Psoas muscle (tissue), 8 donors: ENCODE measurements at regions of chr1 and their contacts with region 1.

Region 1: GRCh38 chr1:64898107-64898845 is 68.1 kb downstream of the JAK1 start:
- DNase-seq: peak; percentile 86 to 93
- ATAC-seq: peak; percentile 97 to 98 (median 98)
- H3K4me3 ChIP-seq: peak overlapping the region; percentile 12
- H3K27ac ChIP-seq: peak overlapping the region; percentile 89
- H3K4me1 ChIP-seq: peaks cover 49% of the 10 kb centered on the region
- H3K27me3 ChIP-seq: no peaks in the 10 kb centered on the region
- CTCF ChIP-seq: no peak

Region 2: GRCh38 chr1:64701886-64702285 is 196.4 kb before region 1 on chr1:
- intact Hi-C with region 1: no loop called
- DNase-seq: no peak
- ATAC-seq: no peak
- H3K4me3 ChIP-seq: no peak overlapping the region
- H3K27ac ChIP-seq: no peak overlapping the region
- H3K4me1 ChIP-seq: no peaks in the 10 kb centered on the region
- H3K27me3 ChIP-seq: no peaks in the 10 kb centered on the region
- CTCF ChIP-seq: no peak

Region 3: DNA sequence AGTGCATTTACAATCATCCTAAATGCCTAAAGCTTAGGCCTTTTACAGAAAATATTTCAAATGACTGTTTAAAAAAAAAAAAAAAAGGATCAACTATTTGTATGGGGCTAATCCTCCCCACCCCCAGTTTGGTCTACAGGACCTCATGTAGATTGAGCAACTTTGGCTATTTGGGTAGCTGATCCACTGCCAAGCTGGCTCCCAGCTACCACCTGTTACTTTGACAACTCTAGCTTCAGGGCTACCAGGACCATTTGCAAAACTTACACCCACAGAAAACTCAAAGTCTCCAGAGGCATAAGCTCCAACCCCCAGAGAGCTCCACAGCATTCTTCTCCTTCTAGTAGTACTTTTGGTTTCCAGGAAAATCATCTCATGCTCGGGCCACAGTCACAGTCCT is 38.7 kb after region 1 on chr1:
- intact Hi-C with region 1: loop called (anchors 5 kb)
- DNase-seq: peak; percentile 39 to 75
- ATAC-seq: peak; percentile 58 to 71 (median 70)
- H3K4me3 ChIP-seq: peak overlapping the region; percentile 18
- H3K27ac ChIP-seq: peak overlapping the region; percentile 77
- H3K4me1 ChIP-seq: peaks cover 84% of the 10 kb centered on the region
- H3K27me3 ChIP-seq: no peaks in the 10 kb centered on the region
- CTCF ChIP-seq: no peak

Region 4: GRCh38 chr1:64980745-64981600 is 82.7 kb after region 1 on chr1:
- intact Hi-C with region 1: no loop called
- DNase-seq: no peak
- ATAC-seq: no peak
- H3K4me3 ChIP-seq: no peak overlapping the region
- H3K27ac ChIP-seq: no peak overlapping the region
- H3K4me1 ChIP-seq: no peaks in the 10 kb centered on the region
- H3K27me3 ChIP-seq: no peaks in the 10 kb centered on the region
- CTCF ChIP-seq: no peak